ENCODE measurements at regions of chr20 and their contacts with region 1.

Region 1: DNA sequence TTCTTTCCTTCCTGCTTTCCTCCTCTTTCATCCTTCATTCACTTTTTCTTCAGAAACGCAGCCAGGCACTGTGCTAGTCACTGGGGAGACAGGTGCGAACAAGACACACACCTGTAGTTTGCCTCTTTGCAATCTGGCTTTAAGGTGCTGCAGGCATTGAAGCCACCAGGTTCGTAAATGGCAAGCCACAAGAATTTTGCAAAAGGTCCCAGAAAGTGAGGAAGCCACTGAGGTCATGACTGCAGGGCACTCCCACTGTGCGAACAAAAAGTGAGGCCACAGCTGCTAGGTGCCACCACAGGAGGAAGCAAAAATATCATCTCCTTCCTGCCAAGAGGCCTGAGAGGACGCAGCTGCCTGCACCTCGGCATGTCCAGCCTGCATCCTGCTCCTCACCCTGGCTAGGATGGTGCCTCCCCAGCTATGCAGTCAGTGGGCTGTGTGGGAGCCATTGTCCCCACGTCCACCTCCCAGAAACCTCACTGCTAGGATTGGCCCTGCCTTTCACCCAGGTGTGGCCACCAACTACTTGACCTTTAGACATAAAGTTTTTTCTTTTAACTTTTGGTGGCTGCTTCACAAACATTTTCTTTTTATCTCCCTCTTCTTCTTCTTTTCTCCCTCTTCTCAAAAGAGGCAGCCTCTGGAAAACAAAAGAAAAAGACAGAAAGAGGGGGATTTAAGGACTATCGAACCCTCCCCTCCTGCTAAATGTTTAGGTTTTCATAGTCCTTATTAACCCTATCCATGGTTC is 230.8 kb downstream of the BCAS1 start:
- DNase-seq: peak; percentile 66
- ATAC-seq: peak; percentile 16
- H3K4me3 Mint-ChIP-seq: peak overlapping the region; percentile 45
- H3K27ac Mint-ChIP-seq: peak overlapping the region; percentile 62
- H3K4me1 Mint-ChIP-seq: peaks cover 69% of the 10 kb centered on the region
- H3K27me3 Mint-ChIP-seq: no peaks in the 10 kb centered on the region

Region 2: GRCh38 chr20:53684971-53685797 is 154.4 kb before region 1 on chr20:
- CTCF ChIA-PET with region 1: no interaction called
- POLR2A ChIA-PET with region 1: interaction called, 3 read pairs
- intact Hi-C with region 1: loop called in 1 of 2 experiments (anchors 5 kb)
- DNase-seq: no peak
- ATAC-seq: peak; percentile 7
- H3K4me3 Mint-ChIP-seq: no peak overlapping the region
- H3K27ac Mint-ChIP-seq: peak overlapping the region; percentile 56
- H3K4me1 Mint-ChIP-seq: peaks cover 26% of the 10 kb centered on the region
- H3K27me3 Mint-ChIP-seq: no peaks in the 10 kb centered on the region

Region 3: GRCh38 chr20:53750827-53751619 is 88.6 kb before region 1 on chr20:
- CTCF ChIA-PET with region 1: interaction called, 3 read pairs
- POLR2A ChIA-PET with region 1: no interaction called
- intact Hi-C with region 1: loop called (anchors 1 to 10 kb)
- DNase-seq: peak; percentile 60
- ATAC-seq: peak; percentile 70
- H3K4me3 Mint-ChIP-seq: peak overlapping the region; percentile 22
- H3K27ac Mint-ChIP-seq: peak overlapping the region; percentile 96
- H3K4me1 Mint-ChIP-seq: peaks cover 73% of the 10 kb centered on the region
- H3K27me3 Mint-ChIP-seq: no peaks in the 10 kb centered on the region

Region 4: GRCh38 chr20:53891306-53891944 is 51.8 kb after region 1 on chr20:
- CTCF ChIA-PET with region 1: interaction called, 4 read pairs
- POLR2A ChIA-PET with region 1: no interaction called
- intact Hi-C with region 1: loop called (anchors 1 kb)
- DNase-seq: no peak
- ATAC-seq: no peak
- H3K4me3 Mint-ChIP-seq: no peak overlapping the region
- H3K27ac Mint-ChIP-seq: no peak overlapping the region
- H3K4me1 Mint-ChIP-seq: peaks cover 44% of the 10 kb centered on the region
- H3K27me3 Mint-ChIP-seq: no peaks in the 10 kb centered on the region

Region 5: GRCh38 chr20:53899351-53900167 is 60.0 kb after region 1 on chr20:
- CTCF ChIA-PET with region 1: interaction called, 5 read pairs
- POLR2A ChIA-PET with region 1: no interaction called
- intact Hi-C with region 1: loop called (anchors 1 kb)
- DNase-seq: peak; percentile 89
- ATAC-seq: peak; percentile 92
- H3K4me3 Mint-ChIP-seq: peak overlapping the region; percentile 10
- H3K27ac Mint-ChIP-seq: peak overlapping the region; percentile 92
- H3K4me1 Mint-ChIP-seq: peaks cover 49% of the 10 kb centered on the region
- H3K27me3 Mint-ChIP-seq: no peaks in the 10 kb centered on the region

Region 6: DNA sequence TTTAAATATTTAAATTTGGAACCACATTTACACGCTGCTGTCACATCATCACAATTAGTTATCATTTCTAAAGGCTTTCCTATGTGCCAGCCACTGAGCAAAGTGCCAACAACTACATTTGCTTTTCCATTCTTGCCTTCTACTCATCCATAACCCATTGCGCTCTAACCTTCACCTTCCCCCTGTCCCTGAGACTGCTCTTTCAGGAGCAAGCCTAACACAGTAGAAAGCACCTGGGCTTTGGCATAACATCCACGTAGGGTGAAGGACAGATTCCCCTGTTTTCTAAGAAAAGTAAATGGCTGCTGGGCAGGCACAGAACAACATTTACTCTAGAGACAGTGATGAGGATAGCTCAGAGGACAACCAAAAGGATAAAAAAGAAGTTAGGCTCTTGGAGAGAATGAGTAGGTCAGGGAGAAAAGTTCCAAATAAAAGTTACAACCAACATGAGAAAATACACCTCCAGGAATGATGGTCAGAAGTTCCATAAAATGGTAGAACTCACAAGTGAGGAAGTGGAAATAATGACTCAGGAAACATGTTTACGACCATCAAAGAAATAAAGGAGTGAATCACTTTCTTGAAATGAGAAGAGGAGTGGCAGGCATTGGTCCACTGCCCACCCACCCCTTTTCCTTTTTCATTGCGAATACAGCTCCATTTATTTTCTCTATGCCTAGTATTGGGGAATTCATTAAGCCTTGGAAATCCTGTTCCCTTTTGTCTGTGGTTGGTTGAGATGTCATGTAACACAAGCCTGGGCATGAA is 445.5 kb after region 1 on chr20:
- CTCF ChIA-PET with region 1: no interaction called
- POLR2A ChIA-PET with region 1: no interaction called
- intact Hi-C with region 1: loop called in 1 of 2 experiments (anchors 10 kb)
- DNase-seq: peak; percentile 68
- ATAC-seq: peak; percentile 87
- H3K4me3 Mint-ChIP-seq: peak overlapping the region; percentile 62
- H3K27ac Mint-ChIP-seq: peak overlapping the region; percentile 94
- H3K4me1 Mint-ChIP-seq: peaks cover 22% of the 10 kb centered on the region
- H3K27me3 Mint-ChIP-seq: peaks cover 11% of the 10 kb centered on the region